WTC11 (cell line): ENCODE measurements at regions of chr4 and their contacts with region 1.

Region 1: DNA sequence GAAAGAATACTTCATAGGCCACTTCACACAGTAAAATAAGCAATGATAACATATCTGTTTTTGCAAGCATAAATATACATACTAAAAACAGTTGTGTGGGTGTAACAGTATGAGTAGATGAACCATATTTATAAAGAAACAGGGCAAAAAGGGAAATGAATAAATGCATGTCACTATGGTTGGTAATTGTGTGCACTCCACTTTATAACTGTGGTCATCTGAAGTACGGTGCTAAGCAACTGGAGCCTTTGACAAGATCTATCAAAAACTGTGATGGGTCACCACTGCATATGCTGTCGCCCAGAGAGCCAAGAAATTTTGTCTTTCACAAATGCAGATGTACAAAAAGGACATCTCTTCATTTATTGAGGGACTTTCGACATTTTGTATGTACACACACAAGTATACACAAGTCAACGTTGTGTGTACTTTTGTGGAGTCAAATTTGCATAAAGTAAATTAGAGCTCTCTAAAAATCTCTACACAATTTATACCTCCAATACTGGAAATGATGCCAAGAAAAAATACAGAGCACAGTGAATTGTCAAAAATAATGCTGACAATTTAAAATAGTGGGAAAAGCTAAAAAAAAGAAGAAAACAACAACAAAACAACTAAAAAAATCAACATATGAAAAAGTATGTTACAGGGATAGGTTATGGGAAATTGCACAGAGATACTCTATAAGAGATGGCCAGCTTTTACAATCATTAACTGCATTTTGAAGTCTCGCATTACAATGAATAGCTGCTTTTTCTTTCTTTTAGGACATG is 123.1 kb upstream of the ENPEP start:
- DNase-seq: no peak
- ATAC-seq: no peak
- H3K4me3 Mint-ChIP-seq: no peak overlapping the region
- H3K27ac Mint-ChIP-seq: no peak overlapping the region
- H3K4me1 Mint-ChIP-seq: no peaks in the 10 kb centered on the region
- H3K27me3 Mint-ChIP-seq: peaks cover 4% of the 10 kb centered on the region
- CTCF ChIP-seq: no peak

Region 2: GRCh38 chr4:110510955-110511544 is 158.2 kb after region 1 on chr4:
- CTCF ChIA-PET with region 1: interaction called, 12 read pairs
- POLR2A ChIA-PET with region 1: no interaction called
- DNase-seq: no peak
- ATAC-seq: no peak
- H3K4me3 Mint-ChIP-seq: no peak overlapping the region
- H3K27ac Mint-ChIP-seq: no peak overlapping the region
- H3K4me1 Mint-ChIP-seq: peaks cover 6% of the 10 kb centered on the region; the same call in 1 of the 2 replicates
- H3K27me3 Mint-ChIP-seq: no peaks in the 10 kb centered on the region
- CTCF ChIP-seq: peak; percentile 61